ENCODE measurements at regions of chr17 and their contacts with region 1.

Region 1: DNA sequence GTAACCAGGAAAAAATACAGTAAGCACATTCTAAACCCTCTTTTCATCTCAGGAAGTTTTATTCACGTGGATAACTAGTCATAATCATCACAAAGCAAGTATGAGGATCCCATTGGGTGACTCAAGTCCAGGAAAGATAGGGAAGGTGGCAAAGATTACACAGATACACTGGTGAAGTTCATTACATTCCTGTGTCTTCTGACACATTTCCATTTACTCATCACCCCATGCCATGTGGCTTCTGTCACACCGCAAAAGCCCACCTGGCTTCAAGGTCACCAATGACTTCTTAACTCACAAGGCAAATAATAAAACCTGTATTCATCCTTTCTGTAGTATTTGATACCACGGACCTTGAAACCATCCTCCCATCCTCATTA is 17.0 kb downstream of the HS3ST3A1 start:
- DNase-seq: no peak
- ATAC-seq: no peak

Region 2: GRCh38 chr17:13540546-13540945 is 44.1 kb before region 1 on chr17:
- intact Hi-C with region 1: no loop called
- DNase-seq: no peak
- ATAC-seq: no peak

Region 3: GRCh38 chr17:13888056-13888609 is 303.4 kb after region 1 on chr17:
- intact Hi-C with region 1: no loop called
- DNase-seq: no peak
- ATAC-seq: peak; percentile 21

Region 4: GRCh38 chr17:14926526-14927122 is 1341.9 kb after region 1 on chr17:
- intact Hi-C with region 1: loop called (anchors 10 kb)
- DNase-seq: no peak
- ATAC-seq: no peak